ENCODE measurements at regions of chr2 and their contacts with region 1.

Region 1: GRCh38 chr2:66803726-66804125 is 368.8 kb downstream of the MEIS1 start:
- DNase-seq: no peak
- H3K4me3 ChIP-seq: no peak overlapping the region
- H3K27ac ChIP-seq: peak overlapping the region; percentile 35 to 69 (median 54)
- H3K4me1 ChIP-seq: peaks cover 0 to 3% (median 0%) of the 10 kb centered on the region in 4 donors
- H3K27me3 ChIP-seq: no peaks in the 10 kb centered on the region
- CTCF ChIP-seq: no peak
- EP300 ChIP-seq: no peak
- POLR2A ChIP-seq: no peak

Region 2: GRCh38 chr2:66084948-66085590 is 718.7 kb before region 1 on chr2:
- in situ Hi-C with region 1: no loop called
- intact Hi-C with region 1: loop called (anchors 5 kb)
- DNase-seq: no peak
- H3K4me3 ChIP-seq: no peak overlapping the region
- H3K27ac ChIP-seq: no peak overlapping the region
- H3K4me1 ChIP-seq: no peaks in the 10 kb centered on the region
- H3K27me3 ChIP-seq: no peaks in the 10 kb centered on the region
- CTCF ChIP-seq: no peak
- EP300 ChIP-seq: no peak
- POLR2A ChIP-seq: no peak

Region 3: GRCh38 chr2:66850376-66850775 is 46.6 kb after region 1 on chr2:
- in situ Hi-C with region 1: no loop called
- intact Hi-C with region 1: loop called (anchors 1 kb)
- DNase-seq: peak; percentile 14
- H3K4me3 ChIP-seq: no peak overlapping the region
- H3K27ac ChIP-seq: peak overlapping the region; percentile 34 to 87 (median 82)
- H3K4me1 ChIP-seq: peaks cover 0 to 7% (median 2%) of the 10 kb centered on the region in 4 donors
- H3K27me3 ChIP-seq: no peaks in the 10 kb centered on the region
- CTCF ChIP-seq: no peak
- EP300 ChIP-seq: no peak
- POLR2A ChIP-seq: no peak

Measured in transverse colon (tissue), 4 donors.